CD4-positive, alpha-beta T cell (primary cell): ENCODE measurements at regions of chrX and their contacts with region 1.

Region 1: GRCh38 chrX:109172091-109172602 is 309.7 kb downstream of the GUCY2F start:
- DNase-seq: no peak
- ATAC-seq: no peak
- H3K4me3 ChIP-seq: no peak overlapping the region
- H3K4me3 Mint-ChIP-seq: no peak overlapping the region
- H3K27ac ChIP-seq: no peak overlapping the region
- H3K27ac Mint-ChIP-seq: no peak overlapping the region
- H3K4me1 ChIP-seq: no peaks in the 10 kb centered on the region
- H3K4me1 Mint-ChIP-seq: no peaks in the 10 kb centered on the region
- H3K27me3 ChIP-seq: no peaks in the 10 kb centered on the region
- H3K27me3 Mint-ChIP-seq: no peaks in the 10 kb centered on the region
- CTCF ChIP-seq: no peak

Region 2: GRCh38 chrX:109218761-109219160 is 46.6 kb after region 1 on chrX:
- CTCF ChIA-PET with region 1: no interaction called
- POLR2A ChIA-PET with region 1: no interaction called
- intact Hi-C with region 1: no loop called
- DNase-seq: no peak
- ATAC-seq: no peak
- H3K4me3 ChIP-seq: no peak overlapping the region
- H3K4me3 Mint-ChIP-seq: no peak overlapping the region
- H3K27ac ChIP-seq: no peak overlapping the region
- H3K27ac Mint-ChIP-seq: no peak overlapping the region
- H3K4me1 ChIP-seq: no peaks in the 10 kb centered on the region
- H3K4me1 Mint-ChIP-seq: no peaks in the 10 kb centered on the region
- H3K27me3 ChIP-seq: no peaks in the 10 kb centered on the region
- H3K27me3 Mint-ChIP-seq: no peaks in the 10 kb centered on the region
- CTCF ChIP-seq: no peak

Region 3: DNA sequence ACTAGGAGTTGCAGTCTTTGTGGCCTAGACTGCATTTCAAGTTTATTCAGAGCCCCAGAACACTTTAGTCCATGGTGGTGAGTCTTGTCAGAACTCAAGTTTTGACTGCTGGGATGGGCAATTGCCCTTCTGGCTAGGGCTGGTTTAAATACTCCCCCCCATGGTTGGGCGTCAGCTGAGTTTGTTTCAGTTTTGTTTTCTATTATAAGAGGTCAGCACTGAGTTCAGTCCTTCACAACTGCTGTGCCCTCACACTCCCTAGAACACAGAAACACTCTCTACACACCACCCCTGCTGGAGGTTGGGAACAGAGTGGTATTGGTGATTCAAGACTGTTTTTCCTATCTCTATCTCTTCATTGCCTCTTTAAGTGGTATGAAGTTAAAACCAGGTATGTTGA is 92.7 kb after region 1 on chrX:
- CTCF ChIA-PET with region 1: no interaction called
- POLR2A ChIA-PET with region 1: no interaction called
- intact Hi-C with region 1: loop called in 1 of 2 experiments (anchors 5 kb)
- DNase-seq: no peak
- ATAC-seq: no peak
- H3K4me3 ChIP-seq: no peak overlapping the region
- H3K4me3 Mint-ChIP-seq: no peak overlapping the region
- H3K27ac ChIP-seq: no peak overlapping the region
- H3K27ac Mint-ChIP-seq: no peak overlapping the region
- H3K4me1 ChIP-seq: no peaks in the 10 kb centered on the region
- H3K4me1 Mint-ChIP-seq: no peaks in the 10 kb centered on the region
- H3K27me3 ChIP-seq: no peaks in the 10 kb centered on the region
- H3K27me3 Mint-ChIP-seq: no peaks in the 10 kb centered on the region
- CTCF ChIP-seq: no peak